CD8-positive, alpha-beta T cell (primary cell): ENCODE measurements at regions of chr1 and their contacts with region 1.

Region 1: DNA sequence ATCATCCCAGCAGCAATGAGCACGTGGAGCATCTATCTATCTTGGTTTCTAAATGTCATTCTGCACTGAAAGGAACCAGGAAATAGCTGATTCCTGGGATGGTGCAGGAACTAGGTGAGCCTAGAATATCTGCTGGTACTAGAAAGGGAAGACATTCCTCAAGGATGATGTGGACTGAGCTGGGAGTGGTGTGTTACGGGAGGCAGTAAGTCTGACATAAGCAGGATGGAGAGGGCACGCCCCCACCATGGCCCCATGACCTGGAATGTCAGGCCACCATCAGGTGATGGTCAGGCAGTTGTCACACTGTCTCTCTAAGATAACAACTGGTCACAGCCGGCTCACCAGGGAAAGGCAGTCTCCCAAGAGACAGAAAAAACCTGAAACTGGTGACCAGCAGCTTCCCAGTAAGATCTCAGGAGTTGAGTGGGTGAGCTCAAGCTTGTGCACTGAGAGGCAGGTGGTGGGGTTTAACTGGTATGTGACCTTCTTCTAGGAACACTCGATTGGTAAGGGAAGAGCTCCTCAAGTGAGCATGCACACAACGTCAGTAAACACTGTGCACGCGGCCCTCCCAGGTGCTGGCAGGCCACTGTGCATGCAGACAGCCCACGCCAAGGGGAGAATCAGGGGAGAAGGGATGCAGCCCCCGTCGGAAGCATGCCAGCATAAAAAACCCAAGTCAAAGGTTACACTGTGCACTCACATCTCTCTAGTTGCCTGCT is 148.7 kb downstream of the ADSS2 start:
- DNase-seq: no peak
- ATAC-seq: no peak
- H3K4me3 ChIP-seq: no peak overlapping the region
- H3K4me3 Mint-ChIP-seq: no peak overlapping the region
- H3K27ac ChIP-seq: no peak overlapping the region
- H3K27ac Mint-ChIP-seq: no peak overlapping the region
- H3K4me1 ChIP-seq: peaks cover 4% of the 10 kb centered on the region
- H3K4me1 Mint-ChIP-seq: peaks cover 8% of the 10 kb centered on the region
- H3K27me3 ChIP-seq: no peaks in the 10 kb centered on the region
- H3K27me3 Mint-ChIP-seq: no peaks in the 10 kb centered on the region
- CTCF ChIP-seq: no peak

Region 2: DNA sequence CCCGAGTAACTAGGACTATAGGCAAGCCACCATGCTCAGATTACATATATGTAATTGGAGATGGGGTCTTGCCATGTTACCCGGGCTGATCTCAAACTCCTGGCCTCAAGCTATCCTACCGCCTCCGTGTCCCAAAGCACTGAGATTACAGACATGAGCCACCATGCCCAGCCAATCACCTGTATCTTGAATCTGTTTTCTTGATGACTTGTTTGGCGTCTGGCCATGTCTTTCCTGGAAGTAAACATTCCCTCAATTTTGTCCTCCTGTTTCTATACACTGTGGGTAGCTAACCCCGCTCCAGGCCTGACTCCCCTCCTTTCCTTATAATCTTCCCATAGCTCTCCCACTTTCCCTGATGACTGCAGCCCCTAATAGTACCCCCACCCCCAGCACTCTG is 13.1 kb before region 1 on chr1:
- CTCF ChIA-PET with region 1: interaction called, 24 read pairs
- POLR2A ChIA-PET with region 1: no interaction called
- intact Hi-C with region 1: no loop called
- DNase-seq: no peak
- ATAC-seq: no peak
- H3K4me3 ChIP-seq: no peak overlapping the region
- H3K4me3 Mint-ChIP-seq: no peak overlapping the region
- H3K27ac ChIP-seq: no peak overlapping the region
- H3K27ac Mint-ChIP-seq: no peak overlapping the region
- H3K4me1 ChIP-seq: peaks cover 6% of the 10 kb centered on the region
- H3K4me1 Mint-ChIP-seq: peaks cover 11% of the 10 kb centered on the region
- H3K27me3 ChIP-seq: no peaks in the 10 kb centered on the region
- H3K27me3 Mint-ChIP-seq: no peaks in the 10 kb centered on the region
- CTCF ChIP-seq: no peak

Region 3: GRCh38 chr1:244536316-244536715 is 233.3 kb after region 1 on chr1:
- CTCF ChIA-PET with region 1: no interaction called
- POLR2A ChIA-PET with region 1: no interaction called
- intact Hi-C with region 1: no loop called
- DNase-seq: no peak
- ATAC-seq: no peak
- H3K4me3 ChIP-seq: no peak overlapping the region
- H3K4me3 Mint-ChIP-seq: no peak overlapping the region
- H3K27ac ChIP-seq: no peak overlapping the region
- H3K27ac Mint-ChIP-seq: no peak overlapping the region
- H3K4me1 ChIP-seq: no peaks in the 10 kb centered on the region
- H3K4me1 Mint-ChIP-seq: no peaks in the 10 kb centered on the region
- H3K27me3 ChIP-seq: no peaks in the 10 kb centered on the region
- H3K27me3 Mint-ChIP-seq: no peaks in the 10 kb centered on the region
- CTCF ChIP-seq: no peak